HEK293 (cell line): ENCODE measurements at regions of chr22 and their contacts with region 1.

Region 1: GRCh38 chr22:39808081-39808480 is 85.5 kb downstream of the ENTHD1 start:
- H3K4me3 ChIP-seq: no peak overlapping the region
- H3K27ac ChIP-seq: no peak overlapping the region
- H3K4me1 ChIP-seq: no peaks in the 10 kb centered on the region
- CTCF ChIP-seq: no peak

Region 2: GRCh38 chr22:39723899-39724351 is 84.2 kb before region 1 on chr22:
- CTCF ChIA-PET with region 1: no interaction called
- POLR2A ChIA-PET with region 1: no interaction called
- H3K4me3 ChIP-seq: no peak overlapping the region
- H3K27ac ChIP-seq: no peak overlapping the region
- H3K4me1 ChIP-seq: peaks cover 2% of the 10 kb centered on the region; the same call in 1 of the 2 replicates
- CTCF ChIP-seq: no peak

Region 3: DNA sequence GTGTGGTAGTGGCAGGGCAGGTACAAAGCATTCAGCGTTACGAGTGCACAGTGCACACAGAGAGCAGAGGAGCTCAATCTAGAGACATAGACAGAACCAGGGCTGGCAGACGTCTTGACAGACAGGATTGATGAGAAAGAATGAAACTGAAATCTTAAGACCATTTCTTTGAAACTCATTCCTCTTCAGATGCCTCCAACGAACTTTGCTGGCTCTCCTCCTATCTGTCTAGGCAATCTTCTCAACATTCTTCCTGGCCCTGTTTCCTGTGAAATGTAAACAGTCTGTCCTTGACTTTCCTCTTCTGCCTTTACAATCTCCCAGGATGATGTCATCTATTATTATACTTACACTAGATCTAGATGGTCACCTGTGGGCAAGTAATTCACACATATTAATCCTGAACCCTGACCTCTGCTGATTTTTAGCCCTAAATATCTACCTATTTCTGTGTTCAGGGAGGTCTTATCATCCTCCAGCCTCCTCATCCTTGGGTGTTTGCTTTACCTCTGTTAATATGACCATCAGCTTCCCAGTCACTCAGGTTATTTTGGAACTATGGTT is 34.0 kb before region 1 on chr22:
- CTCF ChIA-PET with region 1: interaction called, 10 read pairs
- POLR2A ChIA-PET with region 1: no interaction called
- H3K4me3 ChIP-seq: no peak overlapping the region
- H3K27ac ChIP-seq: no peak overlapping the region
- H3K4me1 ChIP-seq: peaks cover 10% of the 10 kb centered on the region; the same call in 1 of the 2 replicates
- CTCF ChIP-seq: no peak

Region 4: DNA sequence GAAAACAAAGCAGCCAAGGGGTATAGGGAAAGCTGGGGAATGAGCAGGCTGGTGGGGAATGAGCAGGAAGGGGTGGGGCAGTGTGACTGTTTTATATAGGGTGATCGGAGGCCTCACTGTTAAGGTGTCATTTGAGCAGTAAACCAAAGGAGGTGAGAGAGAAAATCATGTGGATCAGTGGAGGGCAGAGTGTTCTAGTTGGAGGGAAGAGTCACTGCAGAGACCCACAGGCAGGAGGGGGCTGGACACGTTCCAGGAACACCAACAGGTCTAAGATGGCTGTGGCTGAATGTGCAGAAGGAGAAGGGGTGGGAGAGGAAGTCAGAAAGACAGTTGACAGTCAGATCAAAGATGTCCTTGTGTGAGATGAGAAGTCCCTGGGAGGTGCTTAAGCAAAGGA is 18.3 kb before region 1 on chr22:
- CTCF ChIA-PET with region 1: interaction called, 10 read pairs
- POLR2A ChIA-PET with region 1: interaction called, 3 read pairs
- H3K4me3 ChIP-seq: no peak overlapping the region
- H3K27ac ChIP-seq: no peak overlapping the region
- H3K4me1 ChIP-seq: no peaks in the 10 kb centered on the region
- CTCF ChIP-seq: no peak

Region 5: DNA sequence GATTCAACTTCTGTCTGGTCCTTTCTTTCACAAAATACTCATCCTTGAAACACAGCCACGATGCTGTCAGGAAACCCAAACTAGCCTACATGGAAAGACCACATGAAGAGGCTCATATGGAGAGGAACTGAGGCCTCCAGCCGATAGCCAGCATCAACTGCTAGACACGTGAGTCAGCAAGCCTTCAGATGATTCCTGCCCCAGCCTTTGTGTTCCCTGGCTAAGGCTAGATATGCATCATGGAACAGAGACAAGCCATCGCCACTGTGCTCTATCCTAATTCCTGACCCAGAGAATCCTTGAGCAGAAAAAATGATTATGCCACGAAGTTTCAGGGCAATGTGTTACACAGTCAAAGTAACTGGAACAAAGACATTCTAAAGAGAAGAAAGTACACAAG is 10.0 kb after region 1 on chr22:
- CTCF ChIA-PET with region 1: interaction called, 10 read pairs
- POLR2A ChIA-PET with region 1: no interaction called
- H3K4me3 ChIP-seq: no peak overlapping the region
- H3K27ac ChIP-seq: no peak overlapping the region
- H3K4me1 ChIP-seq: no peaks in the 10 kb centered on the region
- CTCF ChIP-seq: no peak